ENCODE measurements at regions of chr9 and their contacts with region 1.

Region 1: GRCh38 chr9:126398403-126399058 is 71.9 kb downstream of the MVB12B start:
- DNase-seq: peak; percentile 89
- ATAC-seq: peak; percentile 92

Region 2: DNA sequence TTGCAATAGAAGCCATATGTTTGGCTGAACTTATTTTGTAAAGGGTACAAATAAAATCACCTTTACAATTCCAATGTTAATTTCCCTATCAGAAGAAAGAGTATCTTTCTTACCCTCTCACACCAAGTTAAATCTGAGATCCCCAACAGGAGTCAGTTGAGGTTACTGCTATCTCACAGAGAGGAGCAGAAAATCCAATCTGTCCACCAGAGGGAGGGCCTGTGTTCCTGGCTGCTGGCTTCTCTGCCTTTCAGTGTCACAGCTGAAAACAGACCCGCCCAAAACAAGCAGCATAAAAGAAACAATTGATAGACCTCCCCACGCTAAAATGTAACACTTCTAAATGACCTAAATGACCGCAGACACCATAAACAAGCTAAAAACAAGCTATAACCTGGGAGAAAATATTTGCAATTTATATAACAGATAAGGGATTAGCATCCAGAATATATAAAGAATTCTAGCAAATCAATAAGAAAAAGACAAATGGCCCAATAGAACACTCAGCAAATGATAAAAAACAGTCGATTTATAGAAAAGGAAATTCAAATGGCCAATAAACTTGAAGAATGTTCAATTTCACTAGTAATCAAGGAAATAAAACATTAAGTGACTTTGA is 96.4 kb before region 1 on chr9:
- intact Hi-C with region 1: loop called (anchors 5 kb)
- DNase-seq: peak; percentile 48
- ATAC-seq: peak; percentile 87

Region 3: DNA sequence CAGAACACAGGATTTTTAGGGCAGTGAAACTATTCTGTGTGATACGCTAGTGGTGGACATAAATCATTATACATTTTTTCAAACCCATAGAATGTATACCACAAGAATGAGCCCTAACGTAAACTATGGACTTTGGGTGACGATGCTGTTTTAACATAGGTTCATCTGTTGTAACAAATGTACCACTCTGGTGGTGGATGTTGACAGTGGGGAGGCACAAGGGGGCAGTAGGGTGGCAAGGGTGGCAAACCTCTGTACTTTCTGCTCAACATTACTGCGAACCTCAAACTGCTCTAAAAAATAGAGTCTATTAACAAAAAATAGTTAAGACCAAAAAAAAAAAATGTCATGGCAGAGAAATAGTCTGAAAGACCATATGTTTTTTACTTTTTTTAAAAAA is 81.0 kb before region 1 on chr9:
- intact Hi-C with region 1: loop called (anchors 5 kb)
- DNase-seq: no peak
- ATAC-seq: peak; percentile 63